Breast epithelium (tissue), 4 donors: ENCODE measurements at regions of chr1 and their contacts with region 1.

Region 1: DNA sequence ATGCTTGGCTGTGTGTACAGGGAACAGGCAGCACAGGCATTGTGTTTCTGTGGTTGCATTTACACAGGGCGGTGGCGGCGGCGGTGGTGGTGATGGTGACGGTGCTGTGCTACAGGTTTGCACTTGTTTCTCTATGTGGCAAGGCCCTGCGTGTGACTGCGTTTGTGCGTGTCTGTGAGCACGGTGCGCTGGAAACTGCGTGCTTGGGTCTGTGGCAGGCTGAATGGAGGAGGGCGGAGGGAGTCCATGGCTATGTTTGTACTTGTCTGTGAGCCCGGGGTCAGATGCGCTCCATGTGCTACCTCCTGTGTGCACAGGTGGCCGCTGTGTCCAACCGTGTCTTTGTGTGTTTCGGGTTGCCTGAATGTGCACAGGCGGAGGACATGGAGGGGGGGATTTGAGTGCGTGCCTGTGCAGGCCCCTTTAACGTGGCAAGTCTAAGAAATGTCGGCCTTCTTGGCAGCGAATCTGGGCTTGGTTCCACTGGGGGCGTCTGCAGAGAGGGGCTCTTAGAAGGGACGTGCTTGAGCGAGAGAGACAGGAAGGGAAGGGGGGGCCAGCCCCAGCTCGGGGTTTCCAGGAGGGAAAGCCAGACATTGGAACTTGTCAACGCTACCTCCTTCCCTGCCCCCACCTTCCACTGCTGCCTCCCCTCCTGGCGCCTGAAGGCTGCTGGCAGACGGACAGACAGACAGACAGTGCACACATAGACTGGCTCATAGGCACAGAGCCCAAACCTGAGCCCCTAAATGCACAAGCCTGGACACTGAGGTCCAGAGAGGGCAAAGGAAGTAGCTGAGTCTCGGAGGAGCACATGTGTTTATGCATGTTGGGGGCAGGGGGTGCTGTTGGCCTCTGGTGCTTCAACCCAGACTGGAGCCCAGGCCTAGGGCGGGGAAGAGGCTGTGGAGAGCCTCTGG is 32.7 kb upstream of the WASF2 start:
- DNase-seq: peak in 1 of 2 donors; percentile 62
- H3K4me3 ChIP-seq: peak overlapping the region in 2 of 3 donors; percentile 5 to 33
- H3K27ac ChIP-seq: peak overlapping the region; percentile 52 to 82
- H3K4me1 ChIP-seq: peaks cover 26 to 31% of the 10 kb centered on the region in 2 donors
- H3K27me3 ChIP-seq: no peaks in the 10 kb centered on the region
- CTCF ChIP-seq: peak in 1 of 3 donors; percentile 8
- POLR2A ChIP-seq: no peak

Region 2: DNA sequence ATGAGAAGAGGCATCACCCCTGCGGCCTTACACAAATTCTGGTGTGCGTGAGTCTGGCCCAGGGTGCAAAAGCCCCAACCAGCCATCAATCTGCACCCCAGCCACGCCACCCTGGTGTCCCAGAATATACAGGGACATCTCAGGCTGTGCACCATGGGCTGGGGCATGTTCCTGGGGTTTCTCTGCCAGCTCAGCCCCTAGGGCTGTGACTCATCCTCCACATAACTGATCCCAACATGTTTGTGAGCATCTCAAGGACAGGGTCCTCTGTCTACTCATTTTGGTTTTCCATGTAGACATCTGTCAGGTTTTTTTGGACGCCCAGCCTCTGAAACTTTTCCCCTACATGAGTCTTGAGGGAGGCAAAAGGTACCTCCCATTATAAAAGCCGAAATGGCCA is 1150.7 kb before region 1 on chr1:
- intact Hi-C with region 1: loop called (anchors 5 kb)
- DNase-seq: no peak
- H3K4me3 ChIP-seq: no peak overlapping the region
- H3K27ac ChIP-seq: no peak overlapping the region
- H3K4me1 ChIP-seq: no peaks in the 10 kb centered on the region
- H3K27me3 ChIP-seq: no peaks in the 10 kb centered on the region
- CTCF ChIP-seq: no peak
- POLR2A ChIP-seq: no peak

Region 3: GRCh38 chr1:27594562-27595510 is 72.1 kb after region 1 on chr1:
- intact Hi-C with region 1: loop called (anchors 2 kb)
- DNase-seq: no peak
- H3K4me3 ChIP-seq: peak overlapping the region in 2 of 3 donors; percentile 12 to 49
- H3K27ac ChIP-seq: peak overlapping the region; percentile 55 to 93
- H3K4me1 ChIP-seq: peaks cover 49 to 54% of the 10 kb centered on the region in 2 donors
- H3K27me3 ChIP-seq: no peaks in the 10 kb centered on the region
- CTCF ChIP-seq: no peak
- POLR2A ChIP-seq: no peak

Region 4: DNA sequence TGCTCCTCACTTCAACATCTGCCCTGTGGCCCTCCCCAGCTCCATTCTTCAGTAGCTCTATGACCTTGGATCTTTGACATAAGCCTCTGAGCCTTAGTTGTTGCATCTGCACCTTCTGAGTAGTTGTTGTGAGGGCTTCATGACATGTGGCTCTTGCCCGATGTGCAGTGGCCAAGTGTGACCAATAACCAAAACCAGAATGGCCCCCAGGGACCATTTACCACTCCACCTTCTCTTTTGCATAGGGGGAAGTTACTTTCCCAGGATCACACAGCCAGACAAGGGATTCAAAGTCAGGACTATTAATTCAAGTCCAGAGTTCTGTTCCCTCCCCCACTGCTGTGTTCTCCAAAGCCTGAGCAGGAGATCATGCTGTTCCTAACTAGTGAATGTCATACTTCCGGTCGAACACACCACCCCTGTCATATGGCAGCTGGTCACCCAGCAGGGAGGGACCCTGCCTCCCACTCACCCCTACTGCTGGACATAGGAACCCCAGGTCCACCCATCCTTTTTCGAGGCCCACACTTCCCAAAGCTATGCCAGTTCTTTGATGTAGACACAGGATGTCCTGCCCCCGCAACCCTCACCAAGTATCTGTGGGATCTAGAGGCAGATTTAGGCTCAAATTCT is 108.3 kb after region 1 on chr1:
- intact Hi-C with region 1: no loop called
- DNase-seq: peak in 1 of 2 donors; percentile 49
- H3K4me3 ChIP-seq: no peak overlapping the region
- H3K27ac ChIP-seq: peak overlapping the region; percentile 74 to 82
- H3K4me1 ChIP-seq: no peaks in the 10 kb centered on the region
- H3K27me3 ChIP-seq: no peaks in the 10 kb centered on the region
- CTCF ChIP-seq: no peak
- POLR2A ChIP-seq: no peak